AG04449 (cell line): ENCODE measurements at regions of chr1 and their contacts with region 1.

Region 1: DNA sequence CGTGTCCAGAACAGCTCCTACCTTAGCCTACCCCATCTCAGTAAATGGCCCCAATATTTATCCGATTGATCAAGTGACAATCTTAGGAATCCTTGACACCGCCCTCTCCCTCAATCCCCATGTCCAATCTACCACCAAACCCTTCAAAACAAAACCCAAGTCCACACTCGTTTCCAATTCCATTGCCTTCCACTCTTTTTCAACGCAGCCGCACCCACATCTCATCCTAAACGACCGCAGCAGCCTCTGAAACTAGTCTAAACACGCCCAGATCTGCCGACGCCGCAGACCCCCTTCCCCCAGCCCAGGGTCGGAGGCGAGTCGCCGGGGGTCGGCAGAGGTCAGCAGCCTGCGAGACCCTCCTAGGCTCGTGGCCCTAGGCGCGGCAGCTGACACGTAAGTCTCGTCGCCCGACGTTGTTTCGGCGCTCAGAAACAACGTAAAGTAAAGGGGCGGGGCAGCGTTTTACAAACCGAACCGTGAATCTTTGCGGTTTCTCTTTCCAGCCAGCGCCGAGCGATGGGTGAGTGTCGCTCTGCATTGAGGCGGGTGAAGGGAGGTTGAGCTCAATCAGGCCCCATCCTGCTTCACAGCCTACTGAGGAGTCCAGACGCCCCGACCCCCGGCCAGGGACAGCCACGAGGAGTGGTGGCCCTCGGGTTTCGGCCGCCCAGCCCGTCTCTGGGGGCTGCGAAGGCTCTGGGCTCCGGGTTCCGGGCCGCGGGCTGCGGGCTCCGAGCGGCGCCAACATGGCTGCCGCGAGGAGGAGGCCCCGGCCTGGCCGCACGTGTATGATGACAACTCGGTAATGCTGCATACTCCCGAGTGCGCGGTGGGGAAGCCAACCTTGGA is at the start of gene RPS8:
- DNase-seq: peak; percentile 54
- H3K4me3 ChIP-seq: peak within 1 kb of the TSS; percentile 94
- CTCF ChIP-seq: no peak

Region 2: GRCh38 chr1:44757420-44757819 is 17.9 kb before region 1 on chr1:
- CTCF ChIA-PET with region 1: no interaction called
- POLR2A ChIA-PET with region 1: interaction called, 10 read pairs
- DNase-seq: no peak
- H3K4me3 ChIP-seq: no peak overlapping the region
- CTCF ChIP-seq: no peak

Region 3: GRCh38 chr1:44786138-44786840 is 11.0 kb after region 1 on chr1:
- CTCF ChIA-PET with region 1: interaction called, 24 read pairs
- POLR2A ChIA-PET with region 1: interaction called, 13 read pairs
- DNase-seq: no peak
- H3K4me3 ChIP-seq: peak overlapping the region; percentile 50
- CTCF ChIP-seq: peak; percentile 96

Region 4: DNA sequence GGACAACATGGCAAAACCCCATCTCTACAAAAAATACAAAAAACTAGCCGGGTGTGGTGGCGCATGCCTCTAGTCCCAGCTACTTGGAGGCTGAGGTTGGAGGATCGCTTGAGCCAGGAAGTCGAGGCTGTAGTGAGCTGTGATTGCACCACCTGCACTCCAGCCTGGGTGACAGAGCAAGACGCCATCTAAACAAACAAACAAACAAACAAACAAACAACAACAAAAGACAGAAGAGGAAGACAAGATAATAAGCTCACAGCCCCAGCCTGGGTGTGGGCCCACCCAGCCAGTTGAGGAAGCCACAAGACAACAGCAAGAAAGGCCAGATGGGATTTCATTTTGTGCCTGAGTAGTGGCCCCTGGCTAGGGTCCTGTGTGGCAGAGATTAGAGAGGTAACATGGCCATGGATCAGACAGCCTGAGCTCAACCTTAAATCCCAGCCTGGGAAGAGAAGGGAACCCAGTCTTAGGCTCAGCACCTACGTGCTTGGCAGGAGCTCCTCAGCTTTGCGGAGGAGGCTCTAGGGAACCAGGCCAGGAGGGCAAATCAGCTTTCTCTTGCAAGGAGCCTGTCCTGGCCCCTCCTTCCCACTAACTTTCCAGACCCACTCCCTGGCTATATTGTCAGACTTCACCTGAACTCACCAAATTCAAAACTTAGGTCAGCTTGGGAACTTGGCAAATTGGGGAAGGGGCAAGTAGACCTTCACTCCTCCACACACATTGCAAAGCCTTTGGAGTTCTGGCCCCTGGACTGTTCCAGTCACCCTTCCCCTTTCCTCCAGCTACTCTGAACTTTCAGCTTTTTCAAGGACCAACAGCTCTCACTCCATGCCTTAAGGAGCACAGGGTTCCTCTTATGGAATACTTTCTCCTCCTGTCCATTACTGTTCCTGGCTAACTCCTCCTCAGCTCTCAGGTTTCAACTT is 17.7 kb after region 1 on chr1:
- CTCF ChIA-PET with region 1: interaction called, 24 read pairs
- POLR2A ChIA-PET with region 1: interaction called, 13 read pairs
- DNase-seq: no peak
- H3K4me3 ChIP-seq: no peak overlapping the region
- CTCF ChIP-seq: no peak

Region 5: GRCh38 chr1:44799770-44800584 is 24.7 kb after region 1 on chr1 and contains the start of gene PLK3:
- CTCF ChIA-PET with region 1: interaction called, 6 read pairs
- POLR2A ChIA-PET with region 1: interaction called, 36 read pairs
- DNase-seq: peak; percentile 85
- H3K4me3 ChIP-seq: peak within 1 kb of the TSS; percentile 86
- CTCF ChIP-seq: peak; percentile 96

Region 6: DNA sequence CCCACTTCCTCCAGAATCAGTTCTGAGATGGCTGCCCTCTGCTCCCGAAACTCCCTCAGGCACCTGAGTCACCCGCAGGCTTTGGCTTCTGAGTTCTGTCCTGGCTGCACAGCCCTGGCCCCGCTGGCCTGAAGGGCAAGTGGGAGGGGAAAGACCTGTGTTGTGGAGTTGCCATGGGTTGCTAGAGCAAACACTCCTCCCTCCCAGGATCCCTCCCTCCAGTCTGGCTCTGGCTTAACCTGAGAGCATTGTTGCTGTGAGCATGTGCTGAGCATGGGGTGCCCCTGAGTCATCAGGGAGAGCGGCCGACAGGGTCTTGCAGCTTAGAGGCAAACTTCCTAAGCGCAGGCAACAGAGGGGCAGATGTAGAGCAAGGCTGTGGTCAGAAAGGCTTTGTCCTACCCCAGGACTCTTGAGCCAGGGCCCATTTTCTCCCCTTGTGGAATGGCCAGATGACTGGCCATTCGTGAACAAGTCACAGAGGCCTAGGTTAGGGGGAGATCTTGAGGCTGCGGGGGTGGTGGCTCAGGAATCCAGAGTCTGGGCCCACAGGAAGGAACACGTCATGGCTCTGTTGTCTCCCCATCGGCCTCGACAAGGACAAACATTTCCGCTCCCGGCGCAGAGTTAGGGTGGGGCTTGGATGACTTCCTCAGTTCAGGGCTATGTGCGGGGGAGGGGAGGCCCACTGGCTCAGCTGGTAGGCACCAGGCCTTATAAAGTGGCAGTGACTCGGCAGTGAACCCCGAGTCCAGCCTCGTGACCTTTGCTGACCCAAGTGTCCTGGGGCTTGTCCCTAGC is 32.2 kb after region 1 on chr1 and contains the start of gene DYNLT4:
- CTCF ChIA-PET with region 1: interaction called, 3 read pairs
- POLR2A ChIA-PET with region 1: interaction called, 15 read pairs
- DNase-seq: peak; percentile 98
- H3K4me3 ChIP-seq: peak within 1 kb of the TSS; percentile 33
- CTCF ChIP-seq: no peak

Region 7: DNA sequence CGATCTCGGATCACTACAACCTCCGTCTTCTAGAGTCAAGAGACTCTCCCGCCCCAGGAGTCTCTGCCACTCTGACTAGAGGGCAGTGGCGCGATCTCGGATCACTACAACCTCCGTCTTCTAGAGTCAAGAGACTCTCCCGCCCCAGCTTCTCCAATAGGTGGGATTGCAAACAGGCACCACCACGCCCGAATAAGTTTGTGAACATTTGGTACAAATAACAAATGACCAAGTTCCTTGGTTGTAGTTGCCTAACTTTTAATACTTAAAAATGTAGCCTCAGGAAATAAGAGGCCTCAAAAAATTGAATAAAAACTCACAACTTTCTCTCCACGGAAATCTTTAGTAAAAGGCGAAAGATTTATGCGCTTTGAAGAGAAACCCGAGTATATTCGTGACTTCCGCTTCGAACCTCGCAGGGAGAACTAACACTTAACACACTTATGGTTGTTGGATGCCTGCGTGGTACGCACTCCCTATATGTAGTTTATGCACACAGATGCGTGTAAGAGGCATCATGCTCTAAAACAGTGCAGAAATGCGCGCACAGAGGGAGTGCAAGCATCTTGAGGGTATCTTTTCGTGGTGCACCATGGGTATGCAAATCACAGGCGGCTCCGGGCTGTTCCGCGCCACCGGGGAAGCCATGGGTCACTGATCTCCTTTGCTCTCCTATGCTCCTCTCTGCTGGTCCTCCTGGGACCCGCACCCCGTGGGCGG is 44.5 kb after region 1 on chr1:
- CTCF ChIA-PET with region 1: no interaction called
- POLR2A ChIA-PET with region 1: interaction called, 12 read pairs
- DNase-seq: peak; percentile 83
- H3K4me3 ChIP-seq: peak overlapping the region; percentile 59
- CTCF ChIP-seq: no peak